Esophagus muscularis mucosa (tissue), 4 donors: ENCODE measurements at regions of chr6 and their contacts with region 1.

Region 1: GRCh38 chr6:110389689-110390382 is 25.5 kb downstream of the DDO start:
- DNase-seq: no peak
- H3K4me3 ChIP-seq: no peak overlapping the region
- H3K27ac ChIP-seq: peak overlapping the region in 3 of 4 donors; percentile 5 to 27 (median 12)
- H3K4me1 ChIP-seq: peaks cover 10 to 15% (median 12%) of the 10 kb centered on the region in 4 donors
- H3K27me3 ChIP-seq: no peaks in the 10 kb centered on the region
- CTCF ChIP-seq: no peak
- EP300 ChIP-seq: no peak
- POLR2A ChIP-seq: no peak

Region 2: GRCh38 chr6:110178600-110179400 is 211.0 kb before region 1 on chr6:
- intact Hi-C with region 1: loop called (anchors 1 kb)
- DNase-seq: no peak
- H3K4me3 ChIP-seq: peak overlapping the region; percentile 66 to 93 (median 88)
- H3K27ac ChIP-seq: peak overlapping the region; percentile 83 to 91 (median 88)
- H3K4me1 ChIP-seq: peaks cover 26 to 39% (median 36%) of the 10 kb centered on the region in 4 donors
- H3K27me3 ChIP-seq: no peaks in the 10 kb centered on the region
- CTCF ChIP-seq: peak; percentile 68 to 84 (median 74)
- EP300 ChIP-seq: no peak
- POLR2A ChIP-seq: no peak